ENCODE measurements at regions of chr2 and their contacts with region 1.

Region 1: GRCh38 chr2:68121873-68122679 is 35.6 kb upstream of the PNO1 start:
- DNase-seq: peak; percentile 48 to 85 (median 78)
- ATAC-seq: peak; percentile 69
- H3K4me3 ChIP-seq: no peak overlapping the region
- H3K4me3 Mint-ChIP-seq: peak overlapping the region; percentile 35
- H3K27ac ChIP-seq: no peak overlapping the region
- H3K27ac Mint-ChIP-seq: no peak overlapping the region
- H3K4me1 ChIP-seq: peaks cover 4% of the 10 kb centered on the region
- H3K4me1 Mint-ChIP-seq: peaks cover 3% of the 10 kb centered on the region
- H3K27me3 ChIP-seq: no peaks in the 10 kb centered on the region
- H3K27me3 Mint-ChIP-seq: no peaks in the 10 kb centered on the region
- CTCF ChIP-seq: peak; percentile 99

Region 2: GRCh38 chr2:68108120-68108519 is 14.0 kb before region 1 on chr2:
- CTCF ChIA-PET with region 1: interaction called, 15 read pairs
- POLR2A ChIA-PET with region 1: no interaction called
- intact Hi-C with region 1: no loop called
- DNase-seq: no peak
- ATAC-seq: no peak
- H3K4me3 ChIP-seq: no peak overlapping the region
- H3K4me3 Mint-ChIP-seq: no peak overlapping the region
- H3K27ac ChIP-seq: no peak overlapping the region
- H3K27ac Mint-ChIP-seq: no peak overlapping the region
- H3K4me1 ChIP-seq: no peaks in the 10 kb centered on the region
- H3K4me1 Mint-ChIP-seq: no peaks in the 10 kb centered on the region
- H3K27me3 ChIP-seq: no peaks in the 10 kb centered on the region
- H3K27me3 Mint-ChIP-seq: no peaks in the 10 kb centered on the region
- CTCF ChIP-seq: no peak

Region 3: GRCh38 chr2:68151037-68151436 is 29.0 kb after region 1 on chr2:
- CTCF ChIA-PET with region 1: interaction called, 14 read pairs
- POLR2A ChIA-PET with region 1: no interaction called
- intact Hi-C with region 1: loop called in 1 of 2 experiments (anchors 5 kb)
- DNase-seq: no peak
- ATAC-seq: no peak
- H3K4me3 ChIP-seq: no peak overlapping the region
- H3K4me3 Mint-ChIP-seq: no peak overlapping the region
- H3K27ac ChIP-seq: no peak overlapping the region
- H3K27ac Mint-ChIP-seq: peak overlapping the region; percentile 25
- H3K4me1 ChIP-seq: peaks cover 21% of the 10 kb centered on the region
- H3K4me1 Mint-ChIP-seq: peaks cover 31% of the 10 kb centered on the region
- H3K27me3 ChIP-seq: no peaks in the 10 kb centered on the region
- H3K27me3 Mint-ChIP-seq: no peaks in the 10 kb centered on the region
- CTCF ChIP-seq: no peak

Region 4: GRCh38 chr2:68244456-68244855 is 122.4 kb after region 1 on chr2:
- CTCF ChIA-PET with region 1: interaction called, 11 read pairs
- POLR2A ChIA-PET with region 1: no interaction called
- intact Hi-C with region 1: no loop called
- DNase-seq: no peak
- ATAC-seq: no peak
- H3K4me3 ChIP-seq: no peak overlapping the region
- H3K4me3 Mint-ChIP-seq: no peak overlapping the region
- H3K27ac ChIP-seq: no peak overlapping the region
- H3K27ac Mint-ChIP-seq: no peak overlapping the region
- H3K4me1 ChIP-seq: peaks cover 88% of the 10 kb centered on the region
- H3K4me1 Mint-ChIP-seq: peaks cover 34% of the 10 kb centered on the region
- H3K27me3 ChIP-seq: no peaks in the 10 kb centered on the region
- H3K27me3 Mint-ChIP-seq: no peaks in the 10 kb centered on the region
- CTCF ChIP-seq: no peak

Region 5: GRCh38 chr2:68302281-68302875 is 180.3 kb after region 1 on chr2:
- CTCF ChIA-PET with region 1: interaction called, 11 read pairs
- POLR2A ChIA-PET with region 1: no interaction called
- intact Hi-C with region 1: no loop called
- DNase-seq: no peak
- ATAC-seq: no peak
- H3K4me3 ChIP-seq: no peak overlapping the region
- H3K4me3 Mint-ChIP-seq: no peak overlapping the region
- H3K27ac ChIP-seq: no peak overlapping the region
- H3K27ac Mint-ChIP-seq: no peak overlapping the region
- H3K4me1 ChIP-seq: no peaks in the 10 kb centered on the region
- H3K4me1 Mint-ChIP-seq: no peaks in the 10 kb centered on the region
- H3K27me3 ChIP-seq: no peaks in the 10 kb centered on the region
- H3K27me3 Mint-ChIP-seq: peaks cover 13% of the 10 kb centered on the region
- CTCF ChIP-seq: no peak

Measured in CD8-positive, alpha-beta T cell (primary cell).